ENCODE measurements at regions of chr18 and their contacts with region 1.

Region 1: GRCh38 chr18:45384137-45384961 is 230.9 kb upstream of the SLC14A2 start:
- DNase-seq: peak; percentile 72
- H3K4me3 Mint-ChIP-seq: no peak overlapping the region
- H3K27ac Mint-ChIP-seq: no peak overlapping the region
- H3K4me1 Mint-ChIP-seq: peaks cover 6% of the 10 kb centered on the region
- H3K27me3 Mint-ChIP-seq: no peaks in the 10 kb centered on the region
- CTCF ChIP-seq: peak; percentile 69

Region 2: DNA sequence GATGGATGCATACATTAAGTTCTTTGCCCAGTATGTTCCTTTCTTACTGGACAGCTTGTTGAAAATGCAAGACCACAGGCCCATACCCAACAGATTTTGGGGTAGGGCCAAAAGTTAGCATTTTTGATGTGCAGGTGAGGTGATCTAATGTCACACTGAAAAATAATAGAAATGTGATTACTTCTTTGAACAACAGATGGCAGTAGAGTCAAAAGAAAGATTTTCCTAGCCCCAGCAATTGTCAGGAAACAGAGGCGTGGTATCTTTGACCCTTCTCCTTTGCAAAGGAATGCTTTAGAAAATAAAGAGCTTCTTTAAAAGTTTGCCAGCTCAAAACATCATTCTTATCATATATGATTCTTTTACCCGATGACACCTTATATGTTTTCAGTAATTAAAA is 1763.4 kb before region 1 on chr18:
- CTCF ChIA-PET with region 1: interaction called, 13 read pairs
- POLR2A ChIA-PET with region 1: no interaction called
- intact Hi-C with region 1: loop called (anchors 10 kb)
- DNase-seq: peak; percentile 54
- H3K4me3 Mint-ChIP-seq: no peak overlapping the region
- H3K27ac Mint-ChIP-seq: no peak overlapping the region
- H3K4me1 Mint-ChIP-seq: no peaks in the 10 kb centered on the region
- H3K27me3 Mint-ChIP-seq: peaks cover 34% of the 10 kb centered on the region
- CTCF ChIP-seq: peak; percentile 47

Region 3: DNA sequence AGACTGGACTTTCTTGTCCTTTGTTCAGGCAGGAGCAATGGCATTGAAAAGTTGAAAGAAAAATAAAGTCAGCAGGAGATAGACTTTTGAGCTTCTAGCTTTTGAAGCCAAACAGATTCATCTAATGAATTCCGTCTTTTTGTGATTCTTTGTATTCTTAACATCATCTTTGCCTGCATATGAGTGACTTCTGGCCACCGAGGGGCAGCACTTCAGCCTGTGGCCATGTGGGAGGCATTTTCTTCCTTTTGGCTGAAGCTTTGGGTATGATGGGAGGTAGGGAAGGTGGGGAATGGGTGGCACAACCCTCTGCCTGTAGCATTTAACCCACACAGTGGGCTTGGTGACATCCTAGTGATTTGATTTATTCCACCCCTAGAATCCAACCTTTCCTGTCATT is 483.1 kb before region 1 on chr18:
- CTCF ChIA-PET with region 1: interaction called, 6 read pairs
- POLR2A ChIA-PET with region 1: no interaction called
- intact Hi-C with region 1: loop called (anchors 5 kb)
- DNase-seq: peak; percentile 32
- H3K4me3 Mint-ChIP-seq: no peak overlapping the region
- H3K27ac Mint-ChIP-seq: no peak overlapping the region
- H3K4me1 Mint-ChIP-seq: peaks cover 15% of the 10 kb centered on the region
- H3K27me3 Mint-ChIP-seq: no peaks in the 10 kb centered on the region
- CTCF ChIP-seq: peak; percentile 10

Region 4: GRCh38 chr18:45282101-45282812 is 102.1 kb before region 1 on chr18:
- CTCF ChIA-PET with region 1: interaction called, 138 read pairs
- POLR2A ChIA-PET with region 1: no interaction called
- intact Hi-C with region 1: no loop called
- DNase-seq: peak; percentile 30
- H3K4me3 Mint-ChIP-seq: no peak overlapping the region
- H3K27ac Mint-ChIP-seq: no peak overlapping the region
- H3K4me1 Mint-ChIP-seq: no peaks in the 10 kb centered on the region
- H3K27me3 Mint-ChIP-seq: peaks cover 18% of the 10 kb centered on the region
- CTCF ChIP-seq: peak; percentile 21

Region 5: GRCh38 chr18:45330170-45330594 is 54.2 kb before region 1 on chr18:
- CTCF ChIA-PET with region 1: no interaction called
- POLR2A ChIA-PET with region 1: no interaction called
- intact Hi-C with region 1: no loop called
- DNase-seq: no peak
- H3K4me3 Mint-ChIP-seq: no peak overlapping the region
- H3K27ac Mint-ChIP-seq: no peak overlapping the region
- H3K4me1 Mint-ChIP-seq: peaks cover 3% of the 10 kb centered on the region
- H3K27me3 Mint-ChIP-seq: no peaks in the 10 kb centered on the region
- CTCF ChIP-seq: no peak

Region 6: GRCh38 chr18:45402485-45403056 is 18.2 kb after region 1 on chr18:
- CTCF ChIA-PET with region 1: interaction called, 24 read pairs
- POLR2A ChIA-PET with region 1: no interaction called
- intact Hi-C with region 1: no loop called
- DNase-seq: peak; percentile 68
- H3K4me3 Mint-ChIP-seq: no peak overlapping the region
- H3K27ac Mint-ChIP-seq: peak overlapping the region; percentile 25
- H3K4me1 Mint-ChIP-seq: peaks cover 11% of the 10 kb centered on the region
- H3K27me3 Mint-ChIP-seq: no peaks in the 10 kb centered on the region
- CTCF ChIP-seq: no peak

Region 7: DNA sequence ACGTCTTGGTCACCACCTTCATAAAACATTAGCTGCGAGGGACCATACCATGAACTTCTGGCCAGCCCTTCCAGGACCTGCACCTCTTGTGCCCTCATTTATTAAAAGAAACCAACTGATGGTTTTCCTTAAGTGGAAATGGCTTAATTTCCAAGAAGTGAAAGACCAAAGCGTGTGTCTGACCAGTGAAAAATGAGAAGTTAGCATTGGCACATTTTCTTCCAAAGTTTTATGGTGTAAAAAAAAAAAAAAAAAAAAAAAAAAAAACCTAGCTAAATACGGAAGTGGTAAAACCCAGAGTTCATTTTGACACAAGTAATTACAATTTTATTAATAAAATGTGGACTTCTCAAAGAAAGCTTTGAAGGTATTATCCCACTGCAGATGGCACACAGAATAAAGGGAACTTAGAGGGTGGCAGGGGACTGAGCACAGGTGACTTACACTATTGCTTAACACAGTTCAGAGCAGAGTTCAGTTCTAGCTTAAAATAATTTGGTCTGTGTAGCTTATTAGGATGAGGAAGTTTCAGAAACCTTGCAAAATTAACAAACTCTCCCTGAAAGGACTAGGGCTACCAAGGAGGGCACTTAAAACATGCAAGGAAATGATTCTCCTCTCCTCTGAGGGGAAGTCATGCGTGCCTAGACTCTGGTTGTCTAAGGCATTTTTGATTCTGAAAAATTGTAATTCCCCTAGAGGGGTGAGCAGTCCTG is 624.9 kb after region 1 on chr18:
- CTCF ChIA-PET with region 1: no interaction called
- POLR2A ChIA-PET with region 1: no interaction called
- intact Hi-C with region 1: no loop called
- DNase-seq: no peak
- H3K4me3 Mint-ChIP-seq: no peak overlapping the region
- H3K27ac Mint-ChIP-seq: no peak overlapping the region
- H3K4me1 Mint-ChIP-seq: no peaks in the 10 kb centered on the region
- H3K27me3 Mint-ChIP-seq: no peaks in the 10 kb centered on the region
- CTCF ChIP-seq: no peak